Activated CD4-positive, alpha-beta memory T cell treated with anti-CD3 and anti-CD28 coated beads for 36 hours (primary cell): ENCODE measurements at regions of chr1 and their contacts with region 1.

Region 1: GRCh38 chr1:178501705-178502329 is 5.1 kb upstream of the CLEC20A start:
- DNase-seq: peak; percentile 72
- H3K4me3 Mint-ChIP-seq: no peak overlapping the region
- H3K27ac Mint-ChIP-seq: no peak overlapping the region
- H3K4me1 Mint-ChIP-seq: no peaks in the 10 kb centered on the region
- H3K27me3 Mint-ChIP-seq: peaks cover 6% of the 10 kb centered on the region

Region 2: DNA sequence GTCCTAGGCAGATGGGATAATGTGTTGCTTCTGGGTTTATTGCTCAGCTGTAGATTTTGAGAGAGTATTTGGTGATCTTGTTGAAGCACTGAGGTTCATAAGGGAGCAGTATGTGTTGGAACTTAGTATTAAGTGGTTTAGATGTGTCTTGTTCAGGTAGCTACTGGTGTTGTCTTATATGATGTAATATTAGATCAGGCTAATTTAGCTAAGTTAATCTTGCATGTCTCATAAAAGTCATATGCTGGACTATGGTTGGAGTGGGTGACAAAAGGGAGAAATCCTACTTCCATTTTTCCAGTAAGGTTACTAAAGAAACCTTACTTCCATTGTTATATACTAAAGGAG is 201.5 kb before region 1 on chr1:
- CTCF ChIA-PET with region 1: interaction called, 3 read pairs
- POLR2A ChIA-PET with region 1: no interaction called
- intact Hi-C with region 1: loop called (anchors 2 kb)
- DNase-seq: no peak
- H3K4me3 Mint-ChIP-seq: no peak overlapping the region
- H3K27ac Mint-ChIP-seq: no peak overlapping the region
- H3K4me1 Mint-ChIP-seq: no peaks in the 10 kb centered on the region
- H3K27me3 Mint-ChIP-seq: peaks cover 2% of the 10 kb centered on the region